Psoas muscle (tissue), 8 donors: ENCODE measurements at regions of chr19 and their contacts with region 1.

Region 1: GRCh38 chr19:15177269-15178116 is 23.3 kb downstream of the NOTCH3 start:
- DNase-seq: peak; percentile 79 to 90
- ATAC-seq: peak; percentile 86 to 97 (median 94)
- H3K4me3 ChIP-seq: peak overlapping the region; percentile 39
- H3K27ac ChIP-seq: no peak overlapping the region
- H3K4me1 ChIP-seq: peaks cover 3% of the 10 kb centered on the region
- H3K27me3 ChIP-seq: peaks cover 0 to 18% (median 5%) of the 10 kb centered on the region in 3 donors
- CTCF ChIP-seq: peak; percentile 100

Region 2: GRCh38 chr19:15449620-15450527 is 272.4 kb after region 1 on chr19 and contains the start of gene WIZ:
- intact Hi-C with region 1: loop called (anchors 5 to 10 kb)
- DNase-seq: peak; percentile 91 to 94
- ATAC-seq: peak; percentile 16 to 42 (median 18)
- H3K4me3 ChIP-seq: peak within 1 kb of the TSS; percentile 78
- H3K27ac ChIP-seq: peak within 1 kb of the TSS; percentile 78
- H3K4me1 ChIP-seq: peaks cover 27% of the 10 kb centered on the region
- H3K27me3 ChIP-seq: peaks cover 0 to under 1% (median 0%) of the 10 kb centered on the region in 3 donors
- CTCF ChIP-seq: no peak
- total RNA-seq, gene WIZ: 16.6 to 39.1 (median 25.8) TPM